Aorta (tissue), 5 donors: ENCODE measurements at regions of chr10 and their contacts with region 1.

Region 1: GRCh38 chr10:6151087-6151977 is 51.4 kb upstream of the PFKFB3 start:
- DNase-seq: peak in 1 of 2 donors; percentile 86
- ATAC-seq: peak; percentile 69
- H3K4me3 ChIP-seq: no peak overlapping the region
- H3K27ac ChIP-seq: no peak overlapping the region
- H3K4me1 ChIP-seq: no peaks in the 10 kb centered on the region
- H3K27me3 ChIP-seq: no peaks in the 10 kb centered on the region

Region 2: GRCh38 chr10:6108603-6109443 is 42.5 kb before region 1 on chr10:
- intact Hi-C with region 1: loop called (anchors 2 to 5 kb)
- DNase-seq: no peak
- ATAC-seq: peak; percentile 73
- H3K4me3 ChIP-seq: no peak overlapping the region
- H3K27ac ChIP-seq: no peak overlapping the region
- H3K4me1 ChIP-seq: no peaks in the 10 kb centered on the region
- H3K27me3 ChIP-seq: no peaks in the 10 kb centered on the region

Region 3: GRCh38 chr10:6114805-6115341 is 36.5 kb before region 1 on chr10:
- intact Hi-C with region 1: loop called in 1 of 2 experiments (anchors 5 kb)
- DNase-seq: no peak
- ATAC-seq: peak; percentile 22
- H3K4me3 ChIP-seq: no peak overlapping the region
- H3K27ac ChIP-seq: peak overlapping the region in 1 of 2 donors; percentile 19
- H3K4me1 ChIP-seq: no peaks in the 10 kb centered on the region
- H3K27me3 ChIP-seq: no peaks in the 10 kb centered on the region